ENCODE measurements at regions of chr3 and their contacts with region 1.

Region 1: GRCh38 chr3:112519424-112520001 is 20.2 kb upstream of the BTLA start:
- DNase-seq: peak; percentile 55 to 70 (median 64)
- H3K4me3 ChIP-seq: no peak overlapping the region
- H3K4me3 Mint-ChIP-seq: no peak overlapping the region
- H3K27ac ChIP-seq: no peak overlapping the region
- H3K27ac Mint-ChIP-seq: no peak overlapping the region
- H3K4me1 ChIP-seq: peaks cover 14% of the 10 kb centered on the region
- H3K4me1 Mint-ChIP-seq: peaks cover 11 to 15% (median 14%) of the 10 kb centered on the region in 4 donors
- H3K27me3 ChIP-seq: no peaks in the 10 kb centered on the region
- H3K27me3 Mint-ChIP-seq: no peaks in the 10 kb centered on the region

Region 2: DNA sequence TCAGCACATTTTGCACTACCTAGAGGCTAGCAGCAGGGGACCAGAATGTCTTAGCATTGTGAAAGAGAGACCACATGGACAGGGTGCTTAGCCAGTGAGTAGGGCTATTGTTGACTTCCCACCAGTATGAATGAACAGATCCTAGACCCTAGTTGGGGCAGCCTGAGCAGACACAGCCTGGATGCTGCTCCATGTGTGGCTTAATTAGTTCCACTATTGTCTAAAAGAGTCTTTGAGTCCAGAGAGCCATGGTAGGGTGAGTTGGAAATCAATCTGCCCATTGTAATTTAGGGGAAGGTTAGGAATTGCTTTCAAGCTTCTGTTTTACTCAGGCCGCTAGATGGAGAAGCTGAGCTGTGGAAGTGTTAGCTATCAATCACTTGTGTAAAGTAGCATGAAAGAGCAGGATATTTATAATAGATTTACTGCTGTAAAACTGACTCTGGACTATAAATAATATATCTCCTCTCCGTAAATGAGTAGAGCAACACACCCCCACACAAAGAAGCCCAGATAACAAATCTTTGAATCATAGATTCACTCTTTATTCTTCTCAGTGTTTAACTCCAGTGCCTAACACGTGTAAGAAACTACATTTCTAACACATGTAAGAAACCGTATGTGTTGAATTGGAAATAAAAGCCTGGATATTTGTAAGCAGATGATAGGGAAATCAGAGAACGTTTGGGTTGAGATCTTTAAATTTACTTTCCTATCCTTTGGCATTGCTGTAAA is 382.4 kb before region 1 on chr3:
- CTCF ChIA-PET with region 1: interaction called, 33 read pairs
- POLR2A ChIA-PET with region 1: no interaction called
- intact Hi-C with region 1: loop called (anchors 1 kb)
- DNase-seq: peak in 4 of 5 donors; percentile 41 to 50 (median 45)
- H3K4me3 ChIP-seq: no peak overlapping the region
- H3K4me3 Mint-ChIP-seq: peak overlapping the region in 1 of 8 donors; percentile 40
- H3K27ac ChIP-seq: no peak overlapping the region
- H3K27ac Mint-ChIP-seq: peak overlapping the region; percentile 10 to 99 (median 68)
- H3K4me1 ChIP-seq: peaks cover 58% of the 10 kb centered on the region
- H3K4me1 Mint-ChIP-seq: peaks cover 45 to 61% (median 53%) of the 10 kb centered on the region in 4 donors
- H3K27me3 ChIP-seq: no peaks in the 10 kb centered on the region
- H3K27me3 Mint-ChIP-seq: no peaks in the 10 kb centered on the region

Region 3: DNA sequence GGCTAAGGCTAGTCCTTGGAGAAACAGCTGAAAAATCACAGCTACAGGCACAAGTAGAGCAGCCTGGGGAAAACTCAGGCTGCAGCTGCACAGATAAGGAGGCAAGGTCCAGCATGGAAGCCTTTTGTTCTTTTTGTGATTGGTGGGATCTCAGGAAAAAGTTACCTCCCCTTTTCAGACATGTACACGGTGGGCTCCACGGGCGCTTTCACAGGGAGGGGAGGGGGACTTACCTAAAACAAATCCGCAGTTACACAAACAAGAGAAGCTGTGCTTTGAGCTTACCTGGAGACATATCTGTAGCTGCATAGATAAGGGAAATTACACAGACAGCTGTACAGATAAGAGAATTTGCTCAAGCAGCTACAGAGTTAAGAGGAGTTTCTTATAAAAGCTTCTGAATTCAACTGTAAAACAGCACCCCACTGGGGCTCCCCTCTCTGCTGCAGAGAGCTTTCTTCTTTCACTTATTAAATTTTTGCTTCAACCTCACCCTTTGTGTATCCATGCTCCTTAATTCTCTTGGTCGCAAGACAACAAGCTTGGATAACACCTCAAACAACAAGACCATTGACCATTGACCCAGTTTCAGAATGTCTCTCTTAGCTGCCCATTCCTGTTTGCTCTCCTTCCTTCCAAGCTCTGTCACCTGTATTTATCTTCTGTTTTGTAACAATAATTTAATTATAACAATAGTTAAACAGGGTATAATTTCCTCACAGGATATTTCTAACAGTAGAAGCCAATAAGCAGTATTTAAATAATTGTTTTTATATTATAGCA is 197.5 kb before region 1 on chr3:
- CTCF ChIA-PET with region 1: interaction called, 12 read pairs
- POLR2A ChIA-PET with region 1: no interaction called
- intact Hi-C with region 1: loop called (anchors 1 kb)
- DNase-seq: no peak
- H3K4me3 ChIP-seq: no peak overlapping the region
- H3K4me3 Mint-ChIP-seq: no peak overlapping the region
- H3K27ac ChIP-seq: no peak overlapping the region
- H3K27ac Mint-ChIP-seq: no peak overlapping the region
- H3K4me1 ChIP-seq: no peaks in the 10 kb centered on the region
- H3K4me1 Mint-ChIP-seq: peaks cover 0 to 3% (median under 1%) of the 10 kb centered on the region in 4 donors
- H3K27me3 ChIP-seq: no peaks in the 10 kb centered on the region
- H3K27me3 Mint-ChIP-seq: peaks cover 6% of the 10 kb centered on the region in 2 donors

Region 4: GRCh38 chr3:112333002-112333380 is 186.5 kb before region 1 on chr3 and contains the start of gene CD200:
- CTCF ChIA-PET with region 1: interaction called, 17 read pairs
- POLR2A ChIA-PET with region 1: no interaction called
- intact Hi-C with region 1: no loop called
- DNase-seq: peak; percentile 36 to 44 (median 42)
- H3K4me3 ChIP-seq: peak within 1 kb of the TSS; percentile 39 to 61
- H3K4me3 Mint-ChIP-seq: peak within 1 kb of the TSS; percentile 88 to 93 (median 90)
- H3K27ac ChIP-seq: peak within 1 kb of the TSS; percentile 25
- H3K27ac Mint-ChIP-seq: peak within 1 kb of the TSS; percentile 2 to 89 (median 74)
- H3K4me1 ChIP-seq: peaks cover 27% of the 10 kb centered on the region
- H3K4me1 Mint-ChIP-seq: peaks cover 13 to 45% (median 32%) of the 10 kb centered on the region in 4 donors
- H3K27me3 ChIP-seq: no peaks in the 10 kb centered on the region
- H3K27me3 Mint-ChIP-seq: no peaks in the 10 kb centered on the region
- total RNA-seq, gene CD200: 0.93 to 1.8 TPM

Region 5: DNA sequence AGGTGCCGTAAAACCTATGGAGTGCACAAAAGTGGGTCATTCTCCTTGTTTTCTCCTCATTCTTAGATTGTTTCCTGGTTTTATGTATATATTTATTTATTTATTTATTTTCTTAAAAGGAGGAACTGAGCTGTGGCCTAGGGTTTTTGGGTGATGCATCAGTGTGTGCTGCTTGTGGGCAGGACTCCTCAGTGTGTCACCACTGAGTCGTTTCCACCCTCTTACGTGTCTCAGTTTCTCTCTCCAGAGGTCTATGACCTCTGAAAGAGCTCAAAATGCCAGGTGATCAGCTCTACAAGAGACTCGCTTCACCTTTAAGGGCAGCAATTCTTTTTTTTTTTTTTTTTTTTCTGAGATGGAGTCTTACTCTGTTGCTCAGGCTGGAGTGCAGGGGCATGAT is 113.7 kb before region 1 on chr3:
- CTCF ChIA-PET with region 1: no interaction called
- POLR2A ChIA-PET with region 1: no interaction called
- intact Hi-C with region 1: no loop called
- DNase-seq: no peak
- H3K4me3 ChIP-seq: no peak overlapping the region
- H3K4me3 Mint-ChIP-seq: no peak overlapping the region
- H3K27ac ChIP-seq: no peak overlapping the region
- H3K27ac Mint-ChIP-seq: no peak overlapping the region
- H3K4me1 ChIP-seq: no peaks in the 10 kb centered on the region
- H3K4me1 Mint-ChIP-seq: peaks cover 6 to 7% (median 6%) of the 10 kb centered on the region in 4 donors
- H3K27me3 ChIP-seq: no peaks in the 10 kb centered on the region
- H3K27me3 Mint-ChIP-seq: no peaks in the 10 kb centered on the region

Region 6: GRCh38 chr3:112498914-112499711 is 20.4 kb before region 1 on chr3 and contains the start of gene BTLA:
- CTCF ChIA-PET with region 1: interaction called, 5 read pairs
- POLR2A ChIA-PET with region 1: interaction called, 7 read pairs
- intact Hi-C with region 1: loop called (anchors 2 kb)
- DNase-seq: peak; percentile 39 to 48 (median 42)
- H3K4me3 ChIP-seq: peak within 1 kb of the TSS; percentile 65 to 66
- H3K4me3 Mint-ChIP-seq: peak within 1 kb of the TSS; percentile 94 to 100 (median 97)
- H3K27ac ChIP-seq: peak within 1 kb of the TSS; percentile 57
- H3K27ac Mint-ChIP-seq: peak within 1 kb of the TSS; percentile 91 to 97 (median 95)
- H3K4me1 ChIP-seq: peaks cover 44% of the 10 kb centered on the region
- H3K4me1 Mint-ChIP-seq: peaks cover 31 to 63% (median 38%) of the 10 kb centered on the region in 4 donors
- H3K27me3 ChIP-seq: no peaks in the 10 kb centered on the region
- H3K27me3 Mint-ChIP-seq: no peaks in the 10 kb centered on the region
- total RNA-seq, gene BTLA: 22.9 to 24.9 TPM

Region 7: DNA sequence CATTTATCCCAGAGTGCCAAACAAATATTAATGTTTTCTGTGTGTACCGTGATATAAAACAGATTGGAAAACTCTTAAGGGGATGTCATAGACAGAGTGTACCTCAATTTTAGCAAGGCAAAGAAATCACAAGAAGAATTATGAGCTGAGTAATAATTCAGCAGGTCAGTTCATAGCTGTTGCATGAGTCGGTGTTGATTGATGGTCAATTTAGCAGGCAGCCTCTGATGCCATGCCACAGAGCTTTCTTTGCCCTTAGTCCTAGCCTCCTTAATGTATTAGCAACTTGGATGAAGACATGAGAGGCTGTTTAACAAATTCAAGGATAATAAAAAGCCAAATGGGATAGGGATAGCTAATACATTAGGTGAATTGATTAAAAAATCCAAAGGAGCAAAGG is 49.1 kb after region 1 on chr3:
- CTCF ChIA-PET with region 1: no interaction called
- POLR2A ChIA-PET with region 1: no interaction called
- intact Hi-C with region 1: no loop called
- DNase-seq: no peak
- H3K4me3 ChIP-seq: no peak overlapping the region
- H3K4me3 Mint-ChIP-seq: no peak overlapping the region
- H3K27ac ChIP-seq: no peak overlapping the region
- H3K27ac Mint-ChIP-seq: peak overlapping the region in 1 of 7 donors; percentile 22
- H3K4me1 ChIP-seq: peaks cover 1% of the 10 kb centered on the region
- H3K4me1 Mint-ChIP-seq: peaks cover 6 to 29% (median 16%) of the 10 kb centered on the region in 4 donors
- H3K27me3 ChIP-seq: no peaks in the 10 kb centered on the region
- H3K27me3 Mint-ChIP-seq: no peaks in the 10 kb centered on the region